Activated CD4-positive, alpha-beta memory T cell treated with anti-CD3 and anti-CD28 coated beads for 36 hours (primary cell): ENCODE measurements at regions of chr5 and their contacts with region 1.

Region 1: GRCh38 chr5:133930061-133930812 is 38.2 kb downstream of the C5orf15 start:
- DNase-seq: peak; percentile 88
- H3K4me3 Mint-ChIP-seq: peak overlapping the region; percentile 79
- H3K27ac Mint-ChIP-seq: peak overlapping the region; percentile 98
- H3K4me1 Mint-ChIP-seq: peaks cover 47% of the 10 kb centered on the region
- H3K27me3 Mint-ChIP-seq: no peaks in the 10 kb centered on the region

Region 2: DNA sequence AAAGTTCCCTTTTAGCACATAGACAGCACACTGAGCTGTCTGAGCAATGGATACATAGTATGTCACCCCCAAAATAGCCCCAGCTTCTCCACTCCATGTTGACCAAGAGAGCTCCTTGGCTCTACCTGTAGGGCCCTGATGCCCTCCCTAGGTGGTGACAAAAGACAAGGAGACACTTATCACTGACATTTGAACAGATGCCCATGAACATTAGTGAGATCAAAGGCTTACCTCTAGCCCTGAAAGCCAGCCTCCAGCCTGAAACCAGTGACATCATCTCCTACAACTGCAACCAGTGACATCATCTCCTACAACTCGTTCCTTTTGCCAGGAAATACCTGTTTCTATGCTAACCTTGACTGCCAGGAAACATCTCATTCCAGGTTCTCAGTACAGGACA is 440.6 kb before region 1 on chr5:
- CTCF ChIA-PET with region 1: no interaction called
- POLR2A ChIA-PET with region 1: no interaction called
- intact Hi-C with region 1: loop called (anchors 1 kb)
- DNase-seq: peak; percentile 49
- H3K4me3 Mint-ChIP-seq: no peak overlapping the region
- H3K27ac Mint-ChIP-seq: no peak overlapping the region
- H3K4me1 Mint-ChIP-seq: peaks cover 5% of the 10 kb centered on the region
- H3K27me3 Mint-ChIP-seq: no peaks in the 10 kb centered on the region

Region 3: DNA sequence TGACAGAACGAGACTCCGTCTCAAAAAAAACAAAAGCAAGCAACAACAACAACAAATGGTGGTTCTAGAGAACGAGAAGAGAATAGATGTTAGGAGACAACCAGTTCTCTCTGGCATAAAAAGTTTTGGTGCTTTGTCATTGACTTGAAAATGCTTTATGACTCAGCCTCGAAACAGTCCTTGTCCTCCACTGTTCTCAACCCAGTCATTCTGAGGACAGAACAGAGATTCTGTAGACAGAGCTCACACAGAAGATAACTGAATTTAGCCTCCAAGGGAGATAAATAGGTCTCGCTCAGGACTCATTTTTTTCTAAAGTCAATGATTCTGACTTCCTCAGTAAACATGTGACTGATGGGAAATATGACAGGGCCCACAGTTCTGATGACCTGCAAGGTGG is 241.8 kb before region 1 on chr5:
- CTCF ChIA-PET with region 1: no interaction called
- POLR2A ChIA-PET with region 1: no interaction called
- intact Hi-C with region 1: loop called (anchors 5 kb)
- DNase-seq: no peak
- H3K4me3 Mint-ChIP-seq: no peak overlapping the region
- H3K27ac Mint-ChIP-seq: peak overlapping the region; percentile 54
- H3K4me1 Mint-ChIP-seq: peaks cover 7% of the 10 kb centered on the region
- H3K27me3 Mint-ChIP-seq: peaks cover 33% of the 10 kb centered on the region

Region 4: DNA sequence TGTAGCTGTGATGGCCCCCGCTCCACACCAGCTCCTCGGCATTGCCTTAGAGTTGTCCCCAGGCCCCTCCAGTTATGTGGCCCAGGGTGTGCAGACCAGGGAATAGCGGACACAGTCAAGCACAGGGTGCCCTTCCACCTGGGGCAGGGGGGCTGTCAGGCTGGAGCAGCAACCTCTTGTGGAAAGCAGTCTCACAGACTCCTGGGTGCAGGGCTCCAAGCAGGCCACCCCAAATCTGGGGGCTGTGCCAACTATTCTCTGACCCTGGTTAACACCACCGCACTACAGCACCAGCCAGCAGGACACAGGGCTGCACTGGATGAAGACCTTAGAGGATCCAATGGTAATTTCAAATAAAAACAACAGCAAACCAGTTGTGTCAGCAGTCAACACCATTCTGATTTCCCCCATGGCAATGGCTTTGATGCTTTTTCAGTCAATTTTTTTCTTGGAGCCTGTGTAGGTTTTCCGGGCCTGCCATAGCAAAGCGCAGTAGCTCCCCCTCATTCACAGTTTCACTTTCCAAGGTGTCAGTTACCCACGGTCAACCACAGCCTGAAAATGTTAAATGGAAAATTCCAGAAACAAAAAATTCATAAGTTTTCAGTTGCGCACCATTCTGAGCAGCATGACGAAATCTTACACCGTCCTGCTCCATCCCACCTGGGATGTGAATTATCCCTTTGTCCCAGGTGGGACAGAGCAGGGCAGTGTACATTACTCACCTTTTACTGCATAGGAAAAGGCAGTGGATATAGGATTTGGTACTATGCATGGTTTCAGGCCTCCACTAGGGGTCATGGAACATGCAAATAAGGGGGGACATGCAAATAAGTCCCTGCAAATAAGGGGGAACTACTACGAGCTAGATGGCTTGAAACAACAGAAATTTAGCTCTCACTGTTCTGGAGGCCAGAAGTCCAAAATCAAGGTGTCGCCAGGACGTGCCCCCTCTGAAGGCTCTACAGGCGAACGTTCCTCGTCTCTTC is 10.8 kb before region 1 on chr5:
- CTCF ChIA-PET with region 1: interaction called, 6 read pairs
- POLR2A ChIA-PET with region 1: no interaction called
- intact Hi-C with region 1: loop called (anchors 1 kb)
- DNase-seq: peak; percentile 38
- H3K4me3 Mint-ChIP-seq: no peak overlapping the region
- H3K27ac Mint-ChIP-seq: peak overlapping the region; percentile 64
- H3K4me1 Mint-ChIP-seq: peaks cover 25% of the 10 kb centered on the region
- H3K27me3 Mint-ChIP-seq: no peaks in the 10 kb centered on the region

Region 5: GRCh38 chr5:133968049-133968980 is 38.1 kb after region 1 on chr5 and contains the start of gene C5orf15:
- CTCF ChIA-PET with region 1: no interaction called
- POLR2A ChIA-PET with region 1: interaction called, 3 read pairs
- intact Hi-C with region 1: loop called (anchors 1 kb)
- DNase-seq: peak; percentile 97
- H3K4me3 Mint-ChIP-seq: peak within 1 kb of the TSS; percentile 91
- H3K27ac Mint-ChIP-seq: peak within 1 kb of the TSS; percentile 90
- H3K4me1 Mint-ChIP-seq: peaks cover 51% of the 10 kb centered on the region
- H3K27me3 Mint-ChIP-seq: no peaks in the 10 kb centered on the region
- total RNA-seq, gene C5orf15: 23.7 to 26.7 TPM